ENCODE measurements at regions of chr1 and their contacts with region 1.

Region 1: GRCh38 chr1:199684686-199685273 is 342.7 kb upstream of the NR5A2 start:
- DNase-seq: peak; percentile 60 to 85
- H3K4me3 ChIP-seq: no peak overlapping the region
- H3K4me1 ChIP-seq: peaks cover 32% of the 10 kb centered on the region
- H3K27me3 ChIP-seq: no peaks in the 10 kb centered on the region

Region 2: DNA sequence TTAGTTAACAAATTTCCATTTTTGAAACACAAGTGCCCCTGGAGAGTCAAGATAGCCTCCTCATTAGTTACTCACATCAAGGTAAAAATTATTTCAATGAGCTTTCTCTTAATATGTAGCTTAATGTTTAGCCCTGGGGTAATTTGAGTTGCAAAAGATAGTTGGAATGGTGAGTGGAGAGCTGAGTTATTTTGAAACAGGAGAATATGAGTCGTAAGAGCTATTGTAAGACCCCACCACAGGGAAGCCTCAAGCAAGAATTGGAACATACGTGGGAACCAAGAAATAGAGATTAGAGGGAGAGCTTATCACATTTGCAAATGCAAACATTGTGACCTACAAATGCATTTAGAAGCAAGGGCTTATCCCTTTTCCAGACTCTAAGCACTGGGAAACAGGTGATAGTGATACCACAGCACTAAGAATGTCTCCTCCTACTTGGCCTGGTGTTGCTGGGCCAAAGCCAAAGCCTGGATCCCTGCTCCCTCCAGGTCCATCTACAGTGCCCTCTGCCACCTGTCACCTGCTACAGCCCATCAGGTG is 410.9 kb before region 1 on chr1:
- in situ Hi-C with region 1: no loop called
- DNase-seq: peak in 1 of 2 experiments; percentile 7
- H3K4me3 ChIP-seq: no peak overlapping the region
- H3K4me1 ChIP-seq: no peaks in the 10 kb centered on the region; the same call in 1 of the 2 replicates
- H3K27me3 ChIP-seq: no peaks in the 10 kb centered on the region

Region 3: GRCh38 chr1:199573047-199573446 is 111.7 kb before region 1 on chr1:
- in situ Hi-C with region 1: no loop called
- DNase-seq: no peak
- H3K4me3 ChIP-seq: no peak overlapping the region
- H3K4me1 ChIP-seq: no peaks in the 10 kb centered on the region
- H3K27me3 ChIP-seq: no peaks in the 10 kb centered on the region

Region 4: DNA sequence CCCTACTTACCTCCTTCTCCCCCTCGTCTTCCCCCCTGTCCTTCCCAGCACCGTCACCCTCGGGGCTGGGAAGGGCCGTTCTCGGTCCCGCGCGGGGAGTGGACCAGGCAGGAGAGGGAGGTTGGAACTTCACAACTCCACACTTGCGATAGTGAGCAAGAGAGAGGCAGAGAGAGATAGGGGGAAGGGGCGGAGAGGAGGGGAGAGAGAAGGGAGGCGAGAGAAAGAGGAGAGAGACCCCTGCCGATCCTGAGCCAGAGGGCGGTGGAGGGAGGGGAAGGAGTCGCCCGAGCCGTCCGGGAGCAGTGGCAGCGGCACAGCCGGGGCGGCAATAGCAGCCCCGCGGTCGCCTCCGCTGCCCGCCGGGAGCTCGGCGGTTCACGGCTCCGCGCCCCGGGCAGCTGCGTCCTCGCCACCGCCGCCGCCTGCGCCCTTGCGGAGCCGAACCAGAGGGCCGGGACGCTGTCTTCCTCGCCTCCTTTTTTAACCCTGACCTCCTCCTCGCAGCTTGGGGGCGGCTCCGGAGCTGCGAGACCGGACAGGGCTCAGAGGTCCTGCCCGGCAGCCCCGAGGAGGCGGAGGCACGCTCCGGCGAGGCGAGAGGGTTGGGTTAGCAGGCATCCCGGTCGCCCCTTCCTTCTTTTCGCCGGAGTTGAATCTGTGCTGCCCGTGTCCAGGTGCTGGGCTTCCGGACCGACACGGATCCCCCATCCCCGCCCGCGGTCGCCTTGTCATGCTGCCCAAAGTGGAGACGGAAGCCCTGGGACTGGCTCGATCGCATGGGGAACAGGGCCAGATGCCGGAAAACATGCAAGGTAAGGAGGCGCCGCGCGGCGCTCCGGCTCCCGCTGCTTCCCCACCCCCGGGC is 354.4 kb after region 1 on chr1:
- in situ Hi-C with region 1: loop called (anchors 10 kb)
- DNase-seq: peak; percentile 54 to 65
- H3K4me3 ChIP-seq: peak overlapping the region; percentile 78
- H3K4me1 ChIP-seq: peaks cover 22% of the 10 kb centered on the region
- H3K27me3 ChIP-seq: no peaks in the 10 kb centered on the region

Region 5: DNA sequence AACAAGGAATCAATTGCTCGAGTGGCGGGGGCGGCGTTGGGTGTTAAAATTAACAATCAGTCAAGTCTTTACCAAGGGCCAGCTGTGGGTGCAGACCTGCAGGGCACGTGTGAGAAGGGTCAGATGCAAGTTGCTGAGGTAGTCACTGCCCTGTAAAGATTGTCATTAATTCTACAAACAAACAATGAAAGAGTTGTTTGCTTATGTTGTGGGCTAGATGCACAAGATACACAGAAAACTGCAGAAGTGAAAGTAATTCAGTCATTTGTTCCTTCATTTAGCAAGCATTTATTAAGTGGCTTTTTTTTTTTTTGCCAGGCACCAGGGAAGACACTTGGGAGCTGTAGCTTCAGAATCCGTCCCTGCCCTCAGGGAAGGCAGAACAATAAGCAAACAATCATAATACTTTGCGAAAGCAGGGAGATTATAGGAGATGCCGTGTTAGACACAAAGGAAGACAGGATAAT is 422.3 kb after region 1 on chr1:
- in situ Hi-C with region 1: loop called (anchors 25 kb)
- DNase-seq: peak; percentile 80 to 90
- H3K4me3 ChIP-seq: no peak overlapping the region
- H3K4me1 ChIP-seq: peaks cover 6% of the 10 kb centered on the region
- H3K27me3 ChIP-seq: no peaks in the 10 kb centered on the region; the same call in 1 of the 2 replicates

Region 6: GRCh38 chr1:200279810-200280411 is 595.1 kb after region 1 on chr1:
- in situ Hi-C with region 1: loop called (anchors 10 kb)
- DNase-seq: peak; percentile 60 to 83
- H3K4me3 ChIP-seq: no peak overlapping the region
- H3K4me1 ChIP-seq: no peaks in the 10 kb centered on the region
- H3K27me3 ChIP-seq: no peaks in the 10 kb centered on the region

Region 7: DNA sequence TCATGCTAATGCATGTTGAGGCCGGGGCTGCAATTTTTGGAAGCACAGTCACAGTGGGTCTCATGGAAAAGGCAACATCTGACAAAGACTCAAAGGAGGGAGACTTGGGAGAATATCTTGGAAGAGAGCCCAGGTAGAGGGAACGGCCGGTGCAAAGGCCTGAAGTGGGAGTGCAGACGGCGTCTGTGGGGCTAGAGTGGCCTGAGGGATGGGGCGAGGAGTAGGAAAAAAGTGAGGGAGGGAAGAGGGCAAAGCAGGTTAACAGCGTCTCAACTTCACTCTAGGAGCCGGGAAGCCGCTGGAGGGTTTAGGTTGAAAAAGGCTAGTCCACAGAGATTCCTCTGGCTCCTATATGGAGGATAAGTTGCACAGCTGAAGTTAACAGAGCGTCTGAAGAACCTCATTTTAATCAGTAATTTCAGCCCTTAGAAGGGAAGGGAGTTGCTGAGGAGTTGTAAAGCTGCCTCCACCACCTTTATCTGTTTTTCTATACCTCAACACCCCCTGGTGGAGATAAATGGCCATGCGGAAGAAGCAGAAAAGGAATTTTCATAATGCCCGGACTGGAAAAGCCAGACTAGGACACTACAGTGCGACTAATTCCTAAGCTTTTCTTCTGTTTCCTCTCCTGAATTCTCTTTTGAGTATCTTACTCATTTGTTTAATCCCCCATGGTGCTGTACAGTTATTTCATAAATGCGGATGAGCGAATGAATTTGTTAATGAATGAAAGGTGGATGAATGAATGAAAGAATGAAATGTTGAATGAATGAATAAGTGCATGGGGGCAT is 803.8 kb after region 1 on chr1:
- in situ Hi-C with region 1: loop called (anchors 25 kb)
- DNase-seq: peak; percentile 78 to 83
- H3K4me3 ChIP-seq: no peak overlapping the region
- H3K4me1 ChIP-seq: peaks cover 2% of the 10 kb centered on the region; the same call in 1 of the 2 replicates
- H3K27me3 ChIP-seq: no peaks in the 10 kb centered on the region